ENCODE measurements at regions of chr17 and their contacts with region 1.

Region 1: DNA sequence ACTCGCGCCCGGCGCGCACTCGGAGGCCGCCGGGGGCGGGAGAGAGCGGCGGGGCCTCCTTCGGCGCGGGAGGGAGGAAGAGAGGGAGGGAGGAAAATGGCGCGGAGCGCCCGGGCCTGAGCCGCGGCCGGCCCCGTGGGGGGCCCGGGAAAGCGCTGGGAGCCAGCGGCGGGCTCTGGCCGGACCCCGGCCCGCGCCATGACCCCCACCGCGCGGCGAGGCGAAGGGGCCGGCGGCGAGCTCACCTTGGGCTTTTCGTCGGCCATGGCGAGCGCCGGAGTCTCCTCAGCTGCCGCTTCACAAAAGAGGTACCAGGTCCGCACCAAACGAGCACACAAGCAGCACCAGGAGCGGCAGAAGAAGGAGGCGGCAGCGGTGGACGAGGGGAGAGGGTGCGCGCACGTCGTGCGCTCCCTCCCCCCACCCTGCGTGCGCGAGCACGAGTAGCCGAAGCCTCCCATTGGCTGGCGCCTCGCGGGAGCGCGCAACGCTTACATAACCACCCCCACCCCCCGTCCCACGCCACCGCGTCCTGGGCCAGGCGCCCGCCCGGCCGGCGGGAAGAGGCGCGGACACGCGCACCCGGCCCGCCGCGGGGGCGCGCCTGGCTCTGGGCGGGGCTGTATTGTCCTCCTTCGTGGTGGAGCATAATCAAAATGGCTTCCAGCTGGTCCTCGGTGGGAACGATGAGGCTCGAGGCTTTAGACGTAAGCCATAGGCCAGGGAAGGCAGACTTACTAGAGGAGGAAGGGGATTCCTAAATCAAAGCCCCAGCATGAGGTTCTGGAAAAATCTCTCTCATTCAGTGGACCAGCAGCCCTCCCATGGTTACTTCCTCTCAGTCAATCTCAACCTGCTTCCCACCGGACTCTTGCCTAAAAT is at the start of gene SUMO2:
- DNase-seq: peak; percentile 95 to 97
- ATAC-seq: peak; percentile 95 to 97 (median 96)
- H3K4me3 ChIP-seq: peak within 1 kb of the TSS; percentile 63 to 99 (median 95)
- H3K27ac ChIP-seq: peak within 1 kb of the TSS; percentile 96 to 100 (median 99)
- H3K4me1 ChIP-seq: peaks cover 0 to 38% (median 33%) of the 10 kb centered on the region in 9 donors
- H3K27me3 ChIP-seq: no peaks in the 10 kb centered on the region
- CTCF ChIP-seq: peak in 7 of 9 donors; percentile 33 to 58 (median 40)
- total RNA-seq, gene SUMO2: 187 to 258 (median 218) TPM

Region 2: DNA sequence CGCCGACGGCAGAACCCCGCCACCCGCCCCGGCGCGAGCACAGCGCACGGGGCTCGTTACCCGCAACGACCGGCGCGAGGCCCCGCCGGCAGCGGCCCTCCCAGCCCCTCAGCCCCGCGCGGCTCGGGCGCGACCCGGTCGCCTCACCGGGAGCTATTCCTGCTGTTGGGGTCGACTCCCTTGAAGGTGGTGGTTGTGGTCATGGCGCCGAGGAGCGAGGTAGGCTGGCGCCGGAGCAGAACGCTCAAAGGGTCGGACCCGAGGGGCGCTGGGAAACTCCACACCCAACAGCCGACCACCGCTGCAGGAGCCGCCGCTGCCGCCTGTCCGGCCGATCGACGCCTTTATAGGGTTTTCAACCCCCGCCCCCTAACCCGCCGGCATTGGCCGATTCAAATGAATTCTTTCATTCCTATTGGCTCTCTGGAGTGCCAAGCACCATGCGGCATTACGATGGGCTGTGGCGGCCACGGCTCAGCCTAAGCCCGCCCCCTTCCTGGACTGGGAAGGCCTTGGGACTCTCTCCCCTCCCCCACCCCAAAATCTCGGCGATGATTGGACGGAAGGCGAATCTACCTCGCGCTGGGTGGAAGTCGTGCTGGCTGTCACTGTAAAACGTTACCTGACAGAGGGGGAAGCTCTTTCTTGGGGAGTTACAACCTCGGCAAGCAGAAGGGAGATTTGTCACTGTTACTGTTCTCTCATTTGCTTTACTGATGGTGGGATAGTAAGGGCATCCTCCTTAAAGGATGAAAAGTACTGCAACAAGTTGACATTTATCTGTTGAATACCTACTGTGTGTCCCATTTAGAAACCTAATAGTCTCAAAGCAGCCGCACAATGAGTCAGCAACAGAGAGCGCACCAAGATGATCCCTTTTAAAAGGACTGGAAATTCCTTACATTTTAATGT is 28.4 kb before region 1 on chr17 and contains the start of gene JPT1:
- intact Hi-C with region 1: loop called in 1 of 10 experiments (anchors 2 kb)
- DNase-seq: peak; percentile 96 to 99
- ATAC-seq: peak; percentile 100
- H3K4me3 ChIP-seq: peak within 1 kb of the TSS; percentile 43 to 93 (median 80)
- H3K27ac ChIP-seq: peak within 1 kb of the TSS in 9 of 10 donors; percentile 52 to 94 (median 84)
- H3K4me1 ChIP-seq: peaks cover 0 to 26% (median 13%) of the 10 kb centered on the region in 9 donors
- H3K27me3 ChIP-seq: no peaks in the 10 kb centered on the region
- CTCF ChIP-seq: no peak
- total RNA-seq, gene JPT1: 6.7 to 30.0 (median 12.6) TPM

Region 3: DNA sequence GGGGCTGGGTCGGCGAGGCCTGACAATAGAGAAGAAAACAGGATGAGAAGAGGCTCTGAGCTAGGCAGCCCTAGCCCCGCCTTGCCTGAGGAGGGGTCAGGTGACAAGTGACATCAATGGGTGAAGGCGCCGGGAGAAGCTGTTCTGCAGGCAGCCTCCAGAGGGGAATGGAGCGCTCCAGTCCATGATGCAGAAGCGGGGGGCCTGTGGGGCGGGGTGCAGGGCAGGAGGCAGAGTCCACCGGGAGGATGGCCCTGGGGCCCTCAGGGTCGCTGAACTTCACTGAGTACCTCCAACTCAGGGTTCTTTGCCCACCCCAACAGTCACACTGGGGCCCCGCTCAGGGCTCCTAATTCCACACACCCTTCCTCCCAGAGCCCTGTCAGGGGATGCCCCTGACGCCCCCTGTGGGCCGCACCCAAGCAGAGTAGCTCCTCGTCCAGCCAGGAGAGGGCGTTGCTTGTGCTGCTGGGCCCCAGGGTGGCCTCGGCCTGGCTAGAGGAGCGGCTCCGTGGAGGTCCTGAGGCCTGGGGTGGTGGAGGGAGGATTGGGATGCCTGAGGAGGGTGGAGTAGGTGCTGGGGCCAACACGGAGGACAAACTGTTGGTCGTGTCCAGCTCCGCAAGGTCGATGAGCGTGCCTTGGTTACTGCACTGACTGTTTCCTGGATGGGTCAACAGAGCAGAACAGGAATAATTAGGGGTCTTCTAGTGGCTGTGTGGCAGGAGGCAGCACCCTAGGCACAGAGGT is 57.8 kb after region 1 on chr17:
- intact Hi-C with region 1: loop called in 1 of 10 experiments (anchors 10 kb)
- DNase-seq: no peak
- ATAC-seq: peak in 1 of 8 donors; percentile 4
- H3K4me3 ChIP-seq: no peak overlapping the region
- H3K27ac ChIP-seq: peak overlapping the region in 1 of 10 donors; percentile 10
- H3K4me1 ChIP-seq: peaks cover 0 to 37% (median 24%) of the 10 kb centered on the region in 9 donors
- H3K27me3 ChIP-seq: no peaks in the 10 kb centered on the region
- CTCF ChIP-seq: peak in 7 of 9 donors; percentile 37 to 58 (median 49)